Activated naive CD4-positive, alpha-beta T cell treated with anti-CD3 and anti-CD28 coated beads for 36 hours (primary cell): ENCODE measurements at regions of chr1 and their contacts with region 1.

Region 1: DNA sequence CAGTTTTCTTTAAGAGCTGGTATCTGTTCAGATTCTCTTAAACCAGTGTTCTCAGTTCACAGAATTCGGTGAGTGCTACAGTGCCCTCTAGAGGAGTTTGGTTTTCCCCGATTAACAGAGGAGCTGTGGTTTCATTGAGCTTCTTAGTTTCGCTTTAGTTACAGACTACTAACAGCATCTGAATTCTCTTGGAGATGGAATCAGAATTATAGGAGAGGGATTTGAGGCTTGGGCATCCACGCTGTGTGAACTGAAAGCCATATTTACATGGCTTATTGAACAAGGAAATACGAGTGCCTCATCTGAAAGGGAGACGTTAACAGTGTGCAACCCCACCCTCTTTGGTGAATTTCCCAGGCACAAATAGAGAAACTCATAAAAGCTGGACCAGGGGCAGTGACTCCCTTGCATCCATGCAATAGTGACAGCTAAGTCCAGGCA is 202.0 kb downstream of the USH2A start:
- DNase-seq: peak; percentile 23
- H3K4me3 Mint-ChIP-seq: peak overlapping the region; percentile 3
- H3K27ac Mint-ChIP-seq: no peak overlapping the region
- H3K4me1 Mint-ChIP-seq: peaks cover 2% of the 10 kb centered on the region
- H3K27me3 Mint-ChIP-seq: no peaks in the 10 kb centered on the region

Region 2: GRCh38 chr1:215710036-215710898 is 511.0 kb before region 1 on chr1:
- CTCF ChIA-PET with region 1: interaction called, 6 read pairs
- intact Hi-C with region 1: loop called (anchors 1 kb)
- DNase-seq: peak; percentile 28
- H3K4me3 Mint-ChIP-seq: no peak overlapping the region
- H3K27ac Mint-ChIP-seq: no peak overlapping the region
- H3K4me1 Mint-ChIP-seq: no peaks in the 10 kb centered on the region
- H3K27me3 Mint-ChIP-seq: peaks cover 6% of the 10 kb centered on the region